HAP-1 (cell line): ENCODE measurements at regions of chr4 and their contacts with region 1.

Region 1: DNA sequence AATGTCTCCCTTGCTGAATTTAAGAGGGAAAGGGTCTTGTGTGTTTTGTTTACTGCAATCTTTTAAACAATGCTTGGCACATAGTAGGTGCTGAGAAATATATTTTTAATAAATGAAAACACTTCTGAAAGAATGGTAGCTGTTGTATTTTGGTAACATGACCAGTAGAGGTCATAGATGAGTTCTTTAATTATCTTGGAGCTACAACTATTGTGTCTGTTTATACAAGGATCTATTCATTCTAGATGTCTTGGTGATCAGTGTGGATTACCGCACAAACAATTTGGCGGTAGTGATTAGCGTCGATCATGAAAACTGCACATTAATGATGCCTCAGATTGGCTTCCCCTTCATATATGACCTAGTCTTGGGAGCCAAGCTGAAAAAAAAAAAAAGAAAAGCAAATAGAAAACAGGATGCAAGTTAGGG is 21.4 kb upstream of the SCRG1 start:
- DNase-seq: peak in 1 of 2 experiments; percentile 61
- H3K4me3 ChIP-seq: no peak overlapping the region
- H3K4me1 ChIP-seq: no peaks in the 10 kb centered on the region
- H3K27me3 ChIP-seq: peaks cover 4% of the 10 kb centered on the region; the same call in 1 of the 2 replicates

Region 2: DNA sequence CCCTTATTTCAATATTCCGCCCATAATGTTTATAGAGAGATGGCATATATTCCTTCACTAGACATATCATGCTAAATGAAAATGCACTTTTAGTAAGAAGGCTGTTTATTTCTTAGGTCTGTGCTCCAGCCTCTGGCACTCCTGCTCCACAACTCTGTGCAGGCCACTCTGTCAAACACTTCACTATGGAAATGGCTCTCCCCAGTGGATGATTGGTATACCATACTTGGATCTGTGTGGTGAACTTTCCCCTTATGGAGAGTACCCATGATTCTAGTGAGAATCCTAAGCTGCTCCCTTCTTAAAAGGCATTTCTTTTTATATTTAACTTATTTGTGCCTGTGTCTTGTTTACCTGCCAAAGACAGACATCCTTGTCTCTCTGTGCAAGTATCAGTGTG is 731.8 kb before region 1 on chr4:
- in situ Hi-C with region 1: no loop called
- DNase-seq: no peak
- H3K4me3 ChIP-seq: no peak overlapping the region
- H3K4me1 ChIP-seq: no peaks in the 10 kb centered on the region
- H3K27me3 ChIP-seq: no peaks in the 10 kb centered on the region

Region 3: DNA sequence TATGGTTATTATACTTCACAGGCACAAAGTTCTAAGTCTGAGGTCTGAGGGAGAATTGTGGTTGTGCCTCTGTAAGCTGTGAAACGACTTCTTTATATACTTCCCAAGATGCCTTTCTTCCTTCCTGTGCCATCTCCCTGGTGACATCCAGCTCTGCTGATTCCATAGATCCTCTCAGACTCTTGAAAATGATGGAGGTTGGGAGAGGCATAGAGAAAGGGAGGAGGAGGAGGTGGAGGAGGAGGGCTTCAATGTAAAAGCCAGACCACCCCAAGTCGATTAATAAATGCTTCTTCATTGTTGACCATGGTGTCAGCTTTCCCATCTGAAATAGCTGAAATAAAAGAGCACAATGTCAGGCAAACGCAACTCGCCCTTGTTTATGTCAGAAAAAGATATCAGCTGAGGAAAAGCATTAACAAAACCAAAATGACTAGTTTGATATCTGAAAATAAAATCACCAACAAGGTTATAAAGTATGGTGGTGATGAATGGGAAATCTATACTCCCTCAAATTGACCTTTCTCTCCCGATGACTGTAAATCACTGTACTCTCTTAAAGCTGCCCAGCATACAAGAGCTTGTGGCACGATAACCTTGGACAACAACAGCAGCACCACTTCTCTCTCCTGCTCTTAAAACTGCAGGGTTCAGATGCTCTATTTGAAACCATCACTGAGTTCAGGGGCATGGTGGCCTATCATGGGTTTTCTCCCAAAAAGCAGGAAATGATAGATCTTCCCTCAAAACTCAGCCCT is 482.1 kb before region 1 on chr4:
- in situ Hi-C with region 1: no loop called
- DNase-seq: no peak
- H3K4me3 ChIP-seq: no peak overlapping the region
- H3K4me1 ChIP-seq: no peaks in the 10 kb centered on the region
- H3K27me3 ChIP-seq: no peaks in the 10 kb centered on the region; the same call in 1 of the 2 replicates

Region 4: DNA sequence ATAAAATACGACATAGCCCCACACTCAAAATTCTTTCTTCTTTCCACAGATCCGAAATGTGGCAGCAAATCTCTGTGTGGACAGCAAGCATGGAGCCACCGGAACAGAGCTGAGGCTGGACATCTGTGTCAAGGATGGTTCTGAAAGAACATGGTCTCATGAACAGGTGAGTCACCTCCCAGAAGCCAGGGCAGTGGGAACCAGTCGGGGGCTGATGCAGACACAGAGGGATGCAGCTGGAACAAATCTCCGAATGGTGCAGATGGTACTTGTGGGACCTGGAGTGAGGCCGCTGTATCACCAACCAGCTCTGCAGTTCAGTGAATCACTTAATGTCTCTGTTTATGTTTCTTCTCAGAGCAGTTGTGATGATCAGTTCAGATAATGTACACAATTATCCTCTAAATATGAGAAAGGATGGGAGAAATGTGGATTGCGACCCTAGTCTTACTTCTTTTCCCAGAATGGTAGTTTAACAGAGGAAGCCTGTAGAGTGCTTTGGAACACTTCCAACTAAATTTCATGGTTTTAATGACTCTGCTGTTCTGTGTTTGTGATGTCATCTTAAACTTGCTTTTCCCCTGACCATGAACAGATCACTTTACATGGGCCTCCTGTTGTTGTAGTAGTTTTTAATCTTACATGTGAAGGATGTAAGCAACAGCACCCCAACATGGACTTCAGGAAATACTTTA is 411.1 kb before region 1 on chr4:
- in situ Hi-C with region 1: loop called (anchors 5 kb)
- DNase-seq: no peak
- H3K4me3 ChIP-seq: no peak overlapping the region
- H3K4me1 ChIP-seq: no peaks in the 10 kb centered on the region
- H3K27me3 ChIP-seq: 0 out of 2 replicates have a peak, but pooled peaks cover 2% of the 10 kb centered on the region

Region 5: DNA sequence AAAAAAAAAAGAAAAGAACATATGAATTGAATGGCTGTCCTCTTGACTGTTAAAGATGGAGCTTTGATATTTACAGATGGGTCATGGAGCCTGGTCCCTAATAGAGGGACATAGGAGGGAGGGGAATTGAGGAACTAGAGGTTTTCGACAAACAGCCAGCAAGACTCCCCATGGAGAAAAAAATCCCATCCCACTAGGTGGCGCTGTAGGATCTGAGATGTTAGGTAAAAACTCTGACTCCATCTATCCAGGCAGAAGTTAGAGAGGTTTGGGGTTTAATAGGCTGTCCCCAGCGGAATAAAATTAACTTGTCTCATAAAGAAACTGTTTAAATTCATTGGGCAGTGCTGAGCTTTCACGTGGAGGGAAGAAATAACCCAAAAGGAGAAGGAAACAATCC is 132.0 kb before region 1 on chr4:
- in situ Hi-C with region 1: loop called (anchors 10 kb)
- DNase-seq: peak; percentile 28 to 89
- H3K4me3 ChIP-seq: no peak overlapping the region
- H3K4me1 ChIP-seq: no peaks in the 10 kb centered on the region
- H3K27me3 ChIP-seq: no peaks in the 10 kb centered on the region

Region 6: GRCh38 chr4:173318648-173319211 is 101.6 kb before region 1 on chr4:
- in situ Hi-C with region 1: loop called (anchors 5 kb)
- DNase-seq: peak in 1 of 2 experiments; percentile 94
- H3K4me3 ChIP-seq: no peak overlapping the region
- H3K4me1 ChIP-seq: peaks cover 24% of the 10 kb centered on the region
- H3K27me3 ChIP-seq: no peaks in the 10 kb centered on the region

Region 7: DNA sequence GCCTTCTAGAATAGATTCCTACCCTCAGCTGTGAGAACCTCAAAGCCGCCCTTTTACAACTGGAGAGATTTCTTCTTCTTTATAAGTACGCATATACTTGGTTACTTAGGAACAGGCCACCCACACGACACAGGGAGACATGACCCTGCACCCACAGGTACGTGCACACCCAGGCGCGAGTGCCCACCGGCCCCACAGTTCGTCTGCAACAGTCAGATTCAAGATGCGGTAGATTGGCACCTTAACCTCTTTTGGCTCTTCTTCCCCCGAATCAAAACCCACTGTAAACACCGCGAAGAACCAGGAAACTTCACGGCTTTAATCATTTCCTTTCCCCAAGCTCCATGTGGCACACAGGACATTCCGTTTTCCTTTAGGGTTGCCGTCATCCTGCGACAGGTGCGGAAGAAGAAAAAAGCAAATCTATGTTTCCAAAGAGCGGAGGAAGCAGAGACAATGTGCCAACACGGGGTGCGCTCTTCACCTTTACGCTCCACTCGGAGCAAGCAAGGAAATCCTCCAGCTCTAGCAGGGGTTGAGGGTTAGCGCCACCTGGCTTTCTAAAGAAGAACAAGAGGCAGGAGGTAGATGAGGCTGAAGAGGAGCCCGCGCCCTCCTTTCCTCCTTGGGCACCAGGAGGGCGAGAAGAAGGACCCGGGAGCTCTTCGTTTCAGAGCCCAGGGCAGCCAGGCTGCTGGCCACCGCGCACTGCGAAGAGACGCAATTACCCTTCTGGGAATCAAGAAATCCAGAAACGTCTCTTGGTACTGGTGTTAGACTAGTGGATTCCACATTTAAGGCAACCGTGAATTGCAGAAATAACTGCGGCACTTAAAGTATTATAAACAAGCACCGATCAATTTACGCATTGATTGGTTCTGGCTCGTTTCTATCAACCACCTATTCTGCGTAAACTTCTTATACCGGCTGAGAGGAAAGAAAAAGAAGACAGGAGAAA is 74.0 kb after region 1 on chr4:
- in situ Hi-C with region 1: loop called (anchors 10 kb)
- DNase-seq: peak; percentile 71 to 74
- H3K4me3 ChIP-seq: peak overlapping the region; percentile 8; the same call in 1 of the 2 replicates
- H3K4me1 ChIP-seq: peaks cover 9% of the 10 kb centered on the region
- H3K27me3 ChIP-seq: peaks cover 68% of the 10 kb centered on the region